H1 (cell line): ENCODE measurements at regions of chr18 and their contacts with region 1.

Region 1: GRCh38 chr18:48605408-48605845 is 66.6 kb downstream of the CTIF start:
- DNase-seq: peak; percentile 50 to 73
- H3K4me3 ChIP-seq: no peak overlapping the region
- H3K27ac ChIP-seq: no peak overlapping the region
- H3K4me1 ChIP-seq: peaks cover 0 to 7% (median 0%) of the 10 kb centered on the region in 4 experiments; a peak in 2 of 7 replicates
- H3K27me3 ChIP-seq: no peaks in the 10 kb centered on the region
- CTCF ChIP-seq: peak; percentile 73 to 97 (median 81)
- EP300 ChIP-seq: no peak
- POLR2A ChIP-seq: no peak
- RAD21 ChIP-seq: peak; percentile 74 to 83

Region 2: GRCh38 chr18:48538531-48539405 is 66.7 kb before region 1 on chr18 and contains the start of gene CTIF:
- CTCF ChIA-PET with region 1: interaction called, 21 read pairs
- POLR2A ChIA-PET with region 1: interaction called, 3 read pairs
- DNase-seq: peak; percentile 93 to 95
- H3K4me3 ChIP-seq: peak within 1 kb of the TSS; percentile 70 to 92 (median 76)
- H3K27ac ChIP-seq: peak within 1 kb of the TSS; percentile 77
- H3K4me1 ChIP-seq: peaks cover 20 to 36% (median 21%) of the 10 kb centered on the region in 4 experiments
- H3K27me3 ChIP-seq: peaks cover 0 to 9% (median 3%) of the 10 kb centered on the region in 4 experiments; a peak in 4 of 7 replicates
- CTCF ChIP-seq: no peak
- EP300 ChIP-seq: no peak; a peak in 1 of 3 replicates
- POLR2A ChIP-seq: peak in 1 of 2 experiments; percentile 69; a peak in 2 of 3 replicates
- RAD21 ChIP-seq: no peak; a peak in 1 of 4 replicates
- total RNA-seq, gene CTIF: 17.8 and 22.0 TPM in 2 replicates

Region 3: GRCh38 chr18:48590678-48591077 is 14.7 kb before region 1 on chr18:
- CTCF ChIA-PET with region 1: interaction called, 27 read pairs
- POLR2A ChIA-PET with region 1: interaction called, 3 read pairs
- DNase-seq: no peak
- H3K4me3 ChIP-seq: no peak overlapping the region
- H3K27ac ChIP-seq: no peak overlapping the region
- H3K4me1 ChIP-seq: peaks cover 0 to 4% (median 2%) of the 10 kb centered on the region in 4 experiments; a peak in 1 of 7 replicates
- H3K27me3 ChIP-seq: no peaks in the 10 kb centered on the region
- CTCF ChIP-seq: no peak
- EP300 ChIP-seq: no peak
- POLR2A ChIP-seq: no peak
- RAD21 ChIP-seq: no peak

Region 4: DNA sequence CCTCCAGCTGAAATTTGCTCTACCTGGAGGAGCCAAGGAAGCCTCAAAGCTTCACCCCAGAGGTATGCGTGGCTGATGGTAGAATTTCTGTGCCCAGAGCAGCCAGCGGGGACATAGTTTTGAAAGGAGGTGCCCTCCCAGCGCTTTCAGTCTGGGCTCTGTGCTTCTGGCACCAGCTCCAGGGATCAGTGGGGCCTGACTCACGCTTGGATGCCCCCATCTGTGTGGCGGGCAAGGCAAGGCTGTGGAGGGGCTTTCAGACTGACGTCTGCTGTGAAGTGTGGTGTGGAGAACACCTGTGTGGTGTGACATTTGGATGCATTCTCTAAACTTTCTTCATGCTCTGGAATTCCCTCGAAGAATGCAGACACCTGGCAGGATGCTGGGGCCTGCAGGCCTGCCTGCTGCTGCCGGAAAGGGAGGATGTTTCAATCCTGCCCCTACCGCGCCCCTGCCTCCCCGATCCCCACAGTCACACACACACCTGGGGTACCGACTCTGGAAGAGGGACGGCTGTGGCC is 17.5 kb after region 1 on chr18:
- CTCF ChIA-PET with region 1: interaction called, 39 read pairs
- POLR2A ChIA-PET with region 1: interaction called, 4 read pairs
- DNase-seq: no peak
- H3K4me3 ChIP-seq: no peak overlapping the region
- H3K27ac ChIP-seq: no peak overlapping the region; the same call in 1 of the 2 replicates
- H3K4me1 ChIP-seq: peaks cover 0 to 7% (median 3%) of the 10 kb centered on the region in 4 experiments; a peak in 5 of 7 replicates
- H3K27me3 ChIP-seq: no peaks in the 10 kb centered on the region
- CTCF ChIP-seq: no peak
- EP300 ChIP-seq: no peak
- POLR2A ChIP-seq: no peak
- RAD21 ChIP-seq: no peak

Region 5: GRCh38 chr18:48639772-48640432 is 34.5 kb after region 1 on chr18:
- CTCF ChIA-PET with region 1: interaction called, 72 read pairs
- POLR2A ChIA-PET with region 1: no interaction called
- DNase-seq: no peak
- H3K4me3 ChIP-seq: no peak overlapping the region
- H3K27ac ChIP-seq: no peak overlapping the region
- H3K4me1 ChIP-seq: peaks cover 3 to 8% (median 6%) of the 10 kb centered on the region in 4 experiments; a peak in 4 of 7 replicates
- H3K27me3 ChIP-seq: no peaks in the 10 kb centered on the region; a peak in 1 of 7 replicates
- CTCF ChIP-seq: peak; percentile 55 to 60 (median 60)
- EP300 ChIP-seq: no peak
- POLR2A ChIP-seq: no peak
- RAD21 ChIP-seq: peak; percentile 60 to 71

Region 6: GRCh38 chr18:48663931-48664847 is 58.8 kb after region 1 on chr18:
- CTCF ChIA-PET with region 1: interaction called, 18 read pairs
- POLR2A ChIA-PET with region 1: no interaction called
- DNase-seq: peak; percentile 56 to 99
- H3K4me3 ChIP-seq: no peak overlapping the region
- H3K27ac ChIP-seq: no peak overlapping the region
- H3K4me1 ChIP-seq: peaks cover 0 to 9% (median 5%) of the 10 kb centered on the region in 4 experiments; a peak in 5 of 7 replicates
- H3K27me3 ChIP-seq: no peaks in the 10 kb centered on the region
- CTCF ChIP-seq: peak; percentile 93 to 97 (median 93)
- EP300 ChIP-seq: no peak
- POLR2A ChIP-seq: no peak
- RAD21 ChIP-seq: peak; percentile 83 to 89

Region 7: DNA sequence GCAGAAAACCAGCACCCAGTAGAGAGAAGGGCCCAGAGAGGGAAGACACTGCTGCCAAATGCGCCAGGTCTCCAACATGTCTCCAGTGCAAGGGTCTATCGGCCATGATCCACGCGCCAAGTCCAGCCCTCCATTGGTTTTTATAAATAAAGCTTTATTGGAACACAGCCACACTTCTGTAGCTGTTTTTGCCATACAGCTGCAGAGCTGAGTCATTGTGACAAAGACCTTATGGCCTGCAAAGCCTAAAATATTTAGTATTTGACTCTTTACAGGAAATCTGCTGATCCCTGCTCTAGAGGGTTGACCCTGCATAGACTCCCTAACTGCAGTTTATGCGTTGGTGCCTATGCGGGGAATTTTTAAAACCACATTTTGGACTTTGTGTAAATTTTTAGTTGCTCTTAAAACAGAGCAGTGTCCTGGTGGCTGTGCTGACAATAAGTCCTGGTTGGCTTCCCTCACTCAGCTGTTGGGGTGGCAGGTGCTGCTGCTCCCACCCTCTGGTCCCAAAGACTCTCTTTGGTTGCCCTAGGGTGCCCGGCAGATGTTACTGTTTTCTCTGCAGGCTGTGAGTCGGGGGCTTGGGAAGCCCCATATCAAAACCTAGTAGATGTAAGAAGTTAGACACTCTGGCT is 88.3 kb after region 1 on chr18:
- CTCF ChIA-PET with region 1: no interaction called
- POLR2A ChIA-PET with region 1: no interaction called
- DNase-seq: no peak
- H3K4me3 ChIP-seq: no peak overlapping the region
- H3K27ac ChIP-seq: no peak overlapping the region
- H3K4me1 ChIP-seq: no peaks in the 10 kb centered on the region
- H3K27me3 ChIP-seq: no peaks in the 10 kb centered on the region
- CTCF ChIP-seq: no peak
- EP300 ChIP-seq: no peak
- POLR2A ChIP-seq: no peak
- RAD21 ChIP-seq: no peak